ENCODE measurements at regions of chr10 and their contacts with region 1.

Region 1: DNA sequence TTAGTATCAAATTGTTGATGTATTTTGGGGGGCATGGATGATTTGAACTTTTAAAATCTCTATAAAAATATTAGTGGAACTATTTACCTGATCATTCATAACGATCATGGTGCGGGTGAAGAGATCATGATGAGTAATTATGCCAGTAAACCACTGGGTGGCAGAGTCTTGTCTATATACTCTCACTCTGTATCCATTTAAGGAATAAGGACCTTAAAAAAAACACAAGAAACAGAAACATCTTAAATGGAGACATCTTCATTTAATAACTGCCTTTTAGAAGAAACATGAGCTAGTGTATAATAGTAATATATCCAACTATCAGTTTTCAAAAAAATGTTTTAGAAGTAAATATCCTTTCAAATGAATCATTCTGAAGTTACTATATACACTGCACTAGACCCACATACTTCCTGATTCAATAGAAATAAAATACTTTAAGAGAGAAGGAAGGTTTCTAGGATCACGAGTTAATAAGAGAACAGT is 84.0 kb downstream of the NRBF2 start:
- DNase-seq: peak in 7 of 9 donors; percentile 45 to 72 (median 61)
- ATAC-seq: peak; percentile 86
- H3K4me3 ChIP-seq: no peak overlapping the region
- H3K4me3 Mint-ChIP-seq: peak overlapping the region in 7 of 10 donors; percentile 2 to 56 (median 35)
- H3K27ac ChIP-seq: no peak overlapping the region
- H3K27ac Mint-ChIP-seq: peak overlapping the region in 8 of 9 donors; percentile 29 to 88 (median 56)
- H3K4me1 ChIP-seq: peaks cover 17 to 24% of the 10 kb centered on the region in 2 donors
- H3K4me1 Mint-ChIP-seq: peaks cover 38 to 64% (median 61%) of the 10 kb centered on the region in 7 donors
- H3K27me3 ChIP-seq: no peaks in the 10 kb centered on the region
- H3K27me3 Mint-ChIP-seq: no peaks in the 10 kb centered on the region

Region 2: GRCh38 chr10:63227207-63227915 is 10.2 kb after region 1 on chr10:
- CTCF ChIA-PET with region 1: interaction called, 5 read pairs
- POLR2A ChIA-PET with region 1: interaction called, 8 read pairs
- intact Hi-C with region 1: loop called (anchors 1 kb)
- DNase-seq: peak in 6 of 9 donors; percentile 35 to 63 (median 56)
- ATAC-seq: peak; percentile 43
- H3K4me3 ChIP-seq: no peak overlapping the region
- H3K4me3 Mint-ChIP-seq: peak overlapping the region; percentile 8 to 69 (median 53)
- H3K27ac ChIP-seq: peak overlapping the region; percentile 80
- H3K27ac Mint-ChIP-seq: peak overlapping the region; percentile 28 to 97 (median 94)
- H3K4me1 ChIP-seq: peaks cover 23 to 42% of the 10 kb centered on the region in 2 donors
- H3K4me1 Mint-ChIP-seq: peaks cover 26 to 86% (median 75%) of the 10 kb centered on the region in 7 donors
- H3K27me3 ChIP-seq: no peaks in the 10 kb centered on the region
- H3K27me3 Mint-ChIP-seq: no peaks in the 10 kb centered on the region

Region 3: GRCh38 chr10:63355682-63356081 is 138.5 kb after region 1 on chr10:
- CTCF ChIA-PET with region 1: interaction called, 5 read pairs
- POLR2A ChIA-PET with region 1: no interaction called
- intact Hi-C with region 1: loop called in 1 of 2 experiments (anchors 10 kb)
- DNase-seq: no peak
- ATAC-seq: no peak
- H3K4me3 ChIP-seq: no peak overlapping the region
- H3K4me3 Mint-ChIP-seq: no peak overlapping the region
- H3K27ac ChIP-seq: no peak overlapping the region
- H3K27ac Mint-ChIP-seq: no peak overlapping the region
- H3K4me1 ChIP-seq: no peaks in the 10 kb centered on the region
- H3K4me1 Mint-ChIP-seq: peaks cover 7 to 27% (median 18%) of the 10 kb centered on the region in 7 donors
- H3K27me3 ChIP-seq: no peaks in the 10 kb centered on the region
- H3K27me3 Mint-ChIP-seq: no peaks in the 10 kb centered on the region

Region 4: DNA sequence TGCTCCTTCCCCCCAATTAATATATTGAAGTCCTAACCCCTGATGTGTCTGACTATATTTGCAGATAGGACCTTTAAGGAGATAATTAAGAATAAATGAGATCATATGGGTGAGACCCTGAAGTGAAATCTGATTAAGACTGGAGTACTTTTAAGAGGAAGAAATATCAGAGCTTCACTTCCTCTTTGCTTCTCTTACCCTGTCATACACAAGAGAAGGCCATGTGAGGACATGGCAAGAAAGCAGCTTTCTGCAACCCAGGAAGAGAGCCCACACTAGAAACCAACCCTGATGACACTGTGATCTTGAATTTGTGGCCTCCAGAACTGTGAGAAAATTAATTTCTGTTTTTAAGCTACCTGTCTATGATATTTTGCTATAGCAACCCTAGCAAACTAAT is 204.4 kb after region 1 on chr10:
- CTCF ChIA-PET with region 1: no interaction called
- POLR2A ChIA-PET with region 1: no interaction called
- intact Hi-C with region 1: loop called in 1 of 2 experiments (anchors 5 kb)
- DNase-seq: peak in 7 of 9 donors; percentile 35 to 71 (median 53)
- ATAC-seq: peak; percentile 95
- H3K4me3 ChIP-seq: no peak overlapping the region
- H3K4me3 Mint-ChIP-seq: peak overlapping the region in 9 of 10 donors; percentile 49 to 73 (median 68)
- H3K27ac ChIP-seq: peak overlapping the region; percentile 36
- H3K27ac Mint-ChIP-seq: peak overlapping the region; percentile 37 to 97 (median 91)
- H3K4me1 ChIP-seq: peaks cover 0 to 15% of the 10 kb centered on the region in 2 donors
- H3K4me1 Mint-ChIP-seq: peaks cover 16 to 61% (median 49%) of the 10 kb centered on the region in 7 donors
- H3K27me3 ChIP-seq: no peaks in the 10 kb centered on the region
- H3K27me3 Mint-ChIP-seq: no peaks in the 10 kb centered on the region

Region 5: DNA sequence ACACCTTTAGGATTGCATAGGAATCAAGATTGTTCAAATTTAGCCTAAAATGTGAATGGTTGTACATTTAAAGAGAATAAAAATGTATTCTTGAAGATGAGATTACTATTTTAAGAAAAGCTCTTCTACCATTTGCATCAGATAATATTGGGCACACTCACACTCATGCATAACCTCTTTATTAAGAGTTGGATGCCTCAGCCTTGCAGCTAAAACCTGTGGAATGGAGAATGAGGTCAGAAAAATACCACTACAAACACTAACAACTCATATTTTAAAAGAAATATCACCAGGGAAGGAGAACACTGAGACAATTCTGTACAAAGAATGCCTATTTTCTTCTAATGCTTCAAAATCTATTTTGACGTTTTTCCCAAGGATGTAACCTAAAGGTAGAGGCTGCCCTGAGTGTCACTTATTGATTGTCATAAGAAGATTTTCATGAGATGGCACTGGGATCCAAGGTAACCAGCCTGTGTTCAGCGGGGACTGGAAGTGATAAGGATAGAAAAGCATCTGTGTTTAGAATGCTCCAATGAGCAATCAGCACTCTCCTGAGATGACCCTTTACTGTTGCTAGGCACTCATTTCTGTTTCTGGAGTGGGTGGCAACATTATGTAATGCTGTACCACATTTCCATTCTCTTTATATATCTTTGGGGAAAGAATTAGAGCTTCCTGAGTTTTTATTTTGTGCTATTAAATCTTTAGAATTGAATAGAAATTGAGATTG is 330.6 kb after region 1 on chr10:
- CTCF ChIA-PET with region 1: no interaction called
- POLR2A ChIA-PET with region 1: no interaction called
- intact Hi-C with region 1: no loop called
- DNase-seq: no peak
- ATAC-seq: no peak
- H3K4me3 ChIP-seq: no peak overlapping the region
- H3K4me3 Mint-ChIP-seq: no peak overlapping the region
- H3K27ac ChIP-seq: no peak overlapping the region
- H3K27ac Mint-ChIP-seq: no peak overlapping the region
- H3K4me1 ChIP-seq: no peaks in the 10 kb centered on the region
- H3K4me1 Mint-ChIP-seq: peaks cover under 1 to 15% (median 8%) of the 10 kb centered on the region in 7 donors
- H3K27me3 ChIP-seq: no peaks in the 10 kb centered on the region
- H3K27me3 Mint-ChIP-seq: no peaks in the 10 kb centered on the region

Region 6: DNA sequence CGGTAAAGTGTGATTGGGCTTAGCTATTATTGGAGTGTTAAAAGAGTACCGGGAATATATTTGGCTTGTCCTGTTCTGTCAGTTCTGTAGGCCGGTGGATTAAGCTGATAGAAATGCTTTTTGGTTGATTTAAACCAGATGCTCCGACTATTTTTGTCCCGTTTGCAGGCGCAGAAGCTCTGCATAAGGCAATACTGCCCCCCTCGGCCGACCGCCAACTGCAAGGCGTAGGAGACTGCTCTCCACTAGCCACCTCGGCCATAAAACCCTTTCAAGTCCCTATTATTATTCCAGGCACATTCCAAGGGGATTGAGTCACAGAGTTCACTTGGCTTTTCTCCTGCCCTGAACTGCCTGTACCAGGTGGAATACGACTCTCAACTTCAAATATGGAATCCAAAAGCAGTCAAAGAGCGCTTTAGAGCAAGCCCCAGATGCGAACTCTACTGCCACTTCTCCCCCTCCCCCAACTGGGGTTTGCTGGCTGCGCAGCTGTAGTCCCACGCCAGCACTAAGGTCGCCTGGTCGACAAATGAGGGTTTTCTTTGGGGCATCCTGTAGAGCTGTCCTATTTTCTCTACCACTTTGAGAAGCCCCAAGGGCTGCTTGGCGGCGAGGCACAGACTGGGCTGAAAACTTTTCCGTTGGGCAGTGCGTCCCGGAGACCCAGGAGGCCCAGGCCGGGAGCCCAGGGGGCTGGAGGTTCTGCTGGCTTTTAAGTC is 412.4 kb after region 1 on chr10:
- CTCF ChIA-PET with region 1: interaction called, 29 read pairs
- POLR2A ChIA-PET with region 1: interaction called, 5 read pairs
- intact Hi-C with region 1: loop called (anchors 1 kb)
- DNase-seq: peak; percentile 61 to 81 (median 78)
- ATAC-seq: peak; percentile 81
- H3K4me3 ChIP-seq: peak overlapping the region; percentile 90
- H3K4me3 Mint-ChIP-seq: peak overlapping the region; percentile 87 to 98 (median 95)
- H3K27ac ChIP-seq: peak overlapping the region; percentile 69
- H3K27ac Mint-ChIP-seq: peak overlapping the region; percentile 79 to 95 (median 90)
- H3K4me1 ChIP-seq: peaks cover 0 to 17% of the 10 kb centered on the region in 2 donors
- H3K4me1 Mint-ChIP-seq: peaks cover 19 to 40% (median 26%) of the 10 kb centered on the region in 7 donors
- H3K27me3 ChIP-seq: no peaks in the 10 kb centered on the region
- H3K27me3 Mint-ChIP-seq: peaks cover 0 to 3% (median 0%) of the 10 kb centered on the region in 5 donors

Measured in naive thymus-derived CD4-positive, alpha-beta T cell (primary cell).